ENCODE measurements at regions of chr19 and their contacts with region 1.

Region 1: DNA sequence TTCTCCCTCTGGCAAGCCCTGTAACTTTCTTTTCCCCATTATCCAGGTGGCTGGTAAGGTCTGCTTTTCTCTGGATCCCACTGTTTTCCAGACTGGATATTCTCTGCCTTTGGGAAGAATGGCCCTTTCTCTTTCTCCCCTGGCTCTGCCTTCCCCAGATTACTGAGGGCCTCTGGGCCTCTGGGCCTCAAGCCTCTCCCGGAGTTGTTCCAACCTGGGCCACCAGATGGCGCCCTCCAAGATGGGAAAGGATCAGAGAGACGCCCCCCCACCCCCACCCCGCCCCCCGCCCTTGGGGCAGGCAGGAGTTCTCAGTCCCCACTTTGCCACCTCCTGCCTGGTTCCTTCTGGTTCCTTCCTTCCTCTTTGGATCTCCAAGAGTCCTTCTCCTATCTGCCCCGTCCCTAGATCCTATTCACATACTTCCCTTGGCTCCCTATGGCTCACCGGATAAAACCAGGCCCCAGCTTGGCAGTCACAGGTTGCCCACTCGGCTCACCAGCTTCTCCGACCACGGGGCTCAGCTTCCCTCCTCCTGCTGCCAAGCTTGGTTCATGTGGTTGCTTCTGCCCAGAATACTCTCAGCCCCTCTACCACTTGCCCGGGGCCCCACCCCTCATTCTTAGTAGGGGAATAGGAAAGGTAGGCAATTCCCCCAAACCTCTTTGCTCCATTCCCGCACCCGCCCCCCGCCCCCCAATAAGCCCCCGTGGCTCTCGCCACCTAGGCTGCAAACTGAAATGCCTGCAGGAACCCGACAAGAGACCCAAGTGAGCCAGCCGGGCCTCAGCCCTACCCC is 13.1 kb downstream of the EPS8L1 start:
- DNase-seq: peak in 1 of 2 experiments; percentile 99
- H3K4me3 ChIP-seq: 0 out of 8 replicates have a peak overlapping the region, but pooled peaks of 1 of the 4 experiments have one; percentile 84
- H3K27ac ChIP-seq: no peak overlapping the region
- H3K4me1 ChIP-seq: peaks cover 0 to 37% (median 24%) of the 10 kb centered on the region in 4 experiments; a peak in 6 of 7 replicates
- H3K27me3 ChIP-seq: peaks cover 0 to 3% (median 1%) of the 10 kb centered on the region in 4 experiments; a peak in 3 of 7 replicates
- CTCF ChIP-seq: peak; percentile 57 to 59 (median 58)
- EP300 ChIP-seq: no peak
- POLR2A ChIP-seq: no peak; a peak in 1 of 3 replicates
- RAD21 ChIP-seq: peak; percentile 12 to 41; a peak in 3 of 4 replicates

Region 2: GRCh38 chr19:55034751-55035150 is 54.0 kb before region 1 on chr19:
- CTCF ChIA-PET with region 1: no interaction called
- POLR2A ChIA-PET with region 1: no interaction called
- DNase-seq: no peak
- H3K4me3 ChIP-seq: no peak overlapping the region
- H3K27ac ChIP-seq: no peak overlapping the region
- H3K4me1 ChIP-seq: peaks cover 0 to 3% (median 0%) of the 10 kb centered on the region in 4 experiments; a peak in 1 of 7 replicates
- H3K27me3 ChIP-seq: no peaks in the 10 kb centered on the region
- CTCF ChIP-seq: no peak
- EP300 ChIP-seq: no peak
- POLR2A ChIP-seq: no peak
- RAD21 ChIP-seq: no peak

Region 3: GRCh38 chr19:55068950-55069855 is 19.5 kb before region 1 on chr19:
- CTCF ChIA-PET with region 1: interaction called, 13 read pairs
- POLR2A ChIA-PET with region 1: interaction called, 17 read pairs
- DNase-seq: peak in 1 of 2 experiments; percentile 68
- H3K4me3 ChIP-seq: peak overlapping the region; percentile 16 to 60 (median 42)
- H3K27ac ChIP-seq: no peak overlapping the region
- H3K4me1 ChIP-seq: peaks cover 0 to 10% (median 5%) of the 10 kb centered on the region in 4 experiments; a peak in 6 of 7 replicates
- H3K27me3 ChIP-seq: peaks cover 18 to 82% (median 59%) of the 10 kb centered on the region in 4 experiments
- CTCF ChIP-seq: no peak
- EP300 ChIP-seq: no peak
- POLR2A ChIP-seq: no peak
- RAD21 ChIP-seq: 0 out of 4 replicates have a peak, but pooled peaks of 1 of the 2 experiments have one; percentile 1

Region 4: GRCh38 chr19:55099533-55100506 is 11.1 kb after region 1 on chr19:
- CTCF ChIA-PET with region 1: interaction called, 26 read pairs
- POLR2A ChIA-PET with region 1: interaction called, 19 read pairs
- DNase-seq: peak in 1 of 2 experiments; percentile 67
- H3K4me3 ChIP-seq: no peak overlapping the region
- H3K27ac ChIP-seq: no peak overlapping the region
- H3K4me1 ChIP-seq: peaks cover under 1 to 14% (median 9%) of the 10 kb centered on the region in 4 experiments
- H3K27me3 ChIP-seq: 0 out of 7 replicates have a peak, but pooled peaks cover 0 to 3% (median 0%) of the 10 kb centered on the region in 4 experiments
- CTCF ChIP-seq: peak; percentile 42 to 55 (median 54)
- EP300 ChIP-seq: no peak
- POLR2A ChIP-seq: no peak
- RAD21 ChIP-seq: peak; percentile 64 to 73

Region 5: GRCh38 chr19:55117636-55118391 is 29.1 kb after region 1 on chr19 and contains the start of gene PPP1R12C:
- CTCF ChIA-PET with region 1: interaction called, 15 read pairs
- POLR2A ChIA-PET with region 1: interaction called, 72 read pairs
- DNase-seq: peak; percentile 92 to 93
- H3K4me3 ChIP-seq: peak within 1 kb of the TSS; percentile 83 to 92 (median 88)
- H3K27ac ChIP-seq: 0 out of 2 replicates have a peak within 1 kb of the TSS, but pooled peaks have one; percentile 46
- H3K4me1 ChIP-seq: peaks cover 0 to 23% (median 17%) of the 10 kb centered on the region in 4 experiments; a peak in 5 of 7 replicates
- H3K27me3 ChIP-seq: no peaks in the 10 kb centered on the region
- CTCF ChIP-seq: no peak
- EP300 ChIP-seq: no peak; a peak in 1 of 3 replicates
- POLR2A ChIP-seq: no peak
- RAD21 ChIP-seq: no peak
- total RNA-seq, gene PPP1R12C: 71.5 and 88.8 TPM in 2 replicates

Region 6: GRCh38 chr19:55132453-55133129 is 43.8 kb after region 1 on chr19:
- CTCF ChIA-PET with region 1: interaction called, 17 read pairs
- POLR2A ChIA-PET with region 1: interaction called, 5 read pairs
- DNase-seq: no peak
- H3K4me3 ChIP-seq: no peak overlapping the region
- H3K27ac ChIP-seq: no peak overlapping the region
- H3K4me1 ChIP-seq: peaks cover 0 to 2% (median 0%) of the 10 kb centered on the region in 4 experiments; a peak in 1 of 7 replicates
- H3K27me3 ChIP-seq: no peaks in the 10 kb centered on the region
- CTCF ChIP-seq: 0 out of 4 replicates have a peak, but pooled peaks of 1 of the 3 experiments have one; percentile 5
- EP300 ChIP-seq: no peak
- POLR2A ChIP-seq: no peak
- RAD21 ChIP-seq: peak in 1 of 2 experiments; percentile 39; a peak in 2 of 4 replicates

Region 7: GRCh38 chr19:55166530-55167268 is 78.0 kb after region 1 on chr19 and contains the start of gene DNAAF3:
- CTCF ChIA-PET with region 1: interaction called, 16 read pairs
- POLR2A ChIA-PET with region 1: interaction called, 7 read pairs
- DNase-seq: peak in 1 of 2 experiments; percentile 98
- H3K4me3 ChIP-seq: peak within 1 kb of the TSS; percentile 46 to 66 (median 54); a peak in 7 of 8 replicates
- H3K27ac ChIP-seq: peak within 1 kb of the TSS; percentile 85
- H3K4me1 ChIP-seq: peaks cover 0 to 4% (median 2%) of the 10 kb centered on the region in 4 experiments; a peak in 3 of 7 replicates
- H3K27me3 ChIP-seq: peaks cover 0 to 31% (median 12%) of the 10 kb centered on the region in 4 experiments; a peak in 5 of 7 replicates
- CTCF ChIP-seq: no peak
- EP300 ChIP-seq: peak in 1 of 2 experiments; percentile 100; a peak in 2 of 3 replicates
- POLR2A ChIP-seq: no peak
- RAD21 ChIP-seq: no peak
- total RNA-seq, gene DNAAF3: 5.4 and 5.7 TPM in 2 replicates

Measured in H1 (cell line).